ENCODE measurements at regions of chr10 and their contacts with region 1.

Region 1: GRCh38 chr10:75401569-75402485 is at the start of gene ZNF503:
- DNase-seq: peak in 2 of 9 experiments; percentile 25 to 43
- ATAC-seq: peak; percentile 28
- H3K4me3 ChIP-seq: peak within 1 kb of the TSS; percentile 48 to 55
- H3K4me3 Mint-ChIP-seq: peak within 1 kb of the TSS; percentile 78
- H3K27ac ChIP-seq: no peak within 1 kb of the TSS
- H3K27ac Mint-ChIP-seq: no peak within 1 kb of the TSS
- H3K4me1 ChIP-seq: peaks cover 15% of the 10 kb centered on the region
- H3K4me1 Mint-ChIP-seq: peaks cover 26% of the 10 kb centered on the region
- H3K27me3 ChIP-seq: peaks cover 16 to 36% of the 10 kb centered on the region in 2 experiments
- H3K27me3 Mint-ChIP-seq: peaks cover 55% of the 10 kb centered on the region
- CTCF ChIP-seq: no peak
- total RNA-seq, gene ZNF503: not detected

Region 2: DNA sequence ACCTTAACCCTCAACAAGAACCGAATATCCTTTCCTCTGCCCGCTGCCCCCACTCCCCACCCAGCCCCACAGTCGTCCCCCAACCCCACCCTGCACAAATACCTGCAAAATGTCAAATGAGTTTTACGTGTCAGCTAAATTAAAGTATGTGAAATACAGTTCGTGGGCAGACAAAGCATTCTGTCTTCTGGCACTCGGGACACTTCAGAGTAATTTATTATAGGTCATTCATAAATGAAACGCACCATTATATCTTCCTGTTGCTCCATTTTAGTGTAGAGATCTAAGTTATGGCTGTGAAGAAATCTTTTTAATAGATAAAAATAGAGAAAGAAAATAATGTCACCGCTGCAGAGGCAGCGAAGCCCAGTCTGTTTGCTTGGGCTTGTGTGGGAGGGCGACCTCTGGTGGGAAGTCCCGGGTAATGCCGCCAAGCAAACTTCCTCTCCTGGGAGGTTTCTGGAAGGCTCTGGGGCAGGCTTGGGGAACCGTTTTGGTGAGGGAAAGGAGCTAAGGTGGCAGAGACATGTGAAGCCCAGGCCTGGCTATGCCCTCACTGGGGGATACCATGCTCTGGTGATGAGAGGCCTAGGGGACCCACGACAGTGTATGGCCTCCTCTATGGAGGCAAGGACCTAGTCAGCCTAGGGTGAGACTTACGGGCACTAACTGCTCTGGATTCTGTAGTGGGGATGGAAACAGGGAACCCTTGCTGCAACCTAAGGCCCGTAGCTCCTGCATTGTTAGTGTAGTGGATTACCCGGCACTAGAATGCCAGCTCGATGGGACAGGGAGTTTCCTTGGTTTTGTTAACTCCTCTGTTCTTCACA is 634.5 kb after region 1 on chr10:
- CTCF ChIA-PET with region 1: interaction called, 3 read pairs
- POLR2A ChIA-PET with region 1: no interaction called
- intact Hi-C with region 1: loop called in 1 of 2 experiments (anchors 5 kb)
- DNase-seq: peak in 6 of 9 experiments; percentile 7 to 27 (median 22)
- ATAC-seq: no peak
- H3K4me3 ChIP-seq: no peak overlapping the region
- H3K4me3 Mint-ChIP-seq: no peak overlapping the region
- H3K27ac ChIP-seq: no peak overlapping the region
- H3K27ac Mint-ChIP-seq: no peak overlapping the region
- H3K4me1 ChIP-seq: no peaks in the 10 kb centered on the region
- H3K4me1 Mint-ChIP-seq: no peaks in the 10 kb centered on the region
- H3K27me3 ChIP-seq: no peaks in the 10 kb centered on the region
- H3K27me3 Mint-ChIP-seq: peaks cover 5% of the 10 kb centered on the region
- CTCF ChIP-seq: no peak

Measured in CD8-positive, alpha-beta T cell (primary cell).